HAP-1 (cell line): ENCODE measurements at regions of chr15 and their contacts with region 1.

Region 1: GRCh38 chr15:40274350-40275274 is 8.3 kb downstream of the ANKRD63 start:
- DNase-seq: peak; percentile 68 to 90
- H3K4me3 ChIP-seq: no peak overlapping the region
- H3K4me1 ChIP-seq: no peaks in the 10 kb centered on the region
- H3K27me3 ChIP-seq: no peaks in the 10 kb centered on the region

Region 2: GRCh38 chr15:39782441-39783138 is 492.0 kb before region 1 on chr15 and contains the start of gene FSIP1:
- in situ Hi-C with region 1: loop called (anchors 25 kb)
- DNase-seq: peak; percentile 91 to 98
- H3K4me3 ChIP-seq: peak within 1 kb of the TSS; percentile 80
- H3K4me1 ChIP-seq: peaks cover 39% of the 10 kb centered on the region
- H3K27me3 ChIP-seq: no peaks in the 10 kb centered on the region

Region 3: DNA sequence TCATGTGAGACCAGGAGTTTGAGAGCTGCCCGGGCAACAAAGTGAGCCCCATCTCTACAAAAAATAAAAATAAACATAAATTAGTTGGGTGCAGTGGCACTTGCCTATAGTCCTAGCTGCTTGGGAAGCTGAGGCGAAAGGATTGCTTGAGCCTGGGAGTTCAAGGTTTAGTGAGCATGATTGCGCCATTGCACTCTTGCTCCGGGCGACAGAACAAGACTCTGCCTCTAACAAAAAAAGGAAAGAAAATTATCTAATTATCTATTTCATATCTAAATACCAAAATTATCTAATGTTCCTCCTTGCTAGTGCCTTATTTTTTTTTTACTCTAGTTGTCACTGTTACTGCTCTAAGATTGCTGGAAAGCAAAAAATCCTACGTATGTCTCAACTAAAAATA is 52.5 kb before region 1 on chr15:
- in situ Hi-C with region 1: loop called (anchors 5 kb)
- DNase-seq: no peak
- H3K4me3 ChIP-seq: no peak overlapping the region
- H3K4me1 ChIP-seq: no peaks in the 10 kb centered on the region
- H3K27me3 ChIP-seq: no peaks in the 10 kb centered on the region